ENCODE measurements at regions of chr9 and their contacts with region 1.

Region 1: GRCh38 chr9:134099123-134099787 is 31.4 kb upstream of the BRD3 start:
- DNase-seq: peak; percentile 69 to 78 (median 74)
- ATAC-seq: peak; percentile 94
- H3K4me3 ChIP-seq: no peak overlapping the region
- H3K27ac ChIP-seq: no peak overlapping the region
- H3K4me1 ChIP-seq: no peaks in the 10 kb centered on the region
- H3K27me3 ChIP-seq: peaks cover 20 to 37% of the 10 kb centered on the region in 2 experiments; a peak in 4 of 5 replicates
- CTCF ChIP-seq: peak; percentile 81 to 94 (median 93)
- EP300 ChIP-seq: no peak
- POLR2A ChIP-seq: no peak
- RAD21 ChIP-seq: peak; percentile 67 to 93

Region 2: DNA sequence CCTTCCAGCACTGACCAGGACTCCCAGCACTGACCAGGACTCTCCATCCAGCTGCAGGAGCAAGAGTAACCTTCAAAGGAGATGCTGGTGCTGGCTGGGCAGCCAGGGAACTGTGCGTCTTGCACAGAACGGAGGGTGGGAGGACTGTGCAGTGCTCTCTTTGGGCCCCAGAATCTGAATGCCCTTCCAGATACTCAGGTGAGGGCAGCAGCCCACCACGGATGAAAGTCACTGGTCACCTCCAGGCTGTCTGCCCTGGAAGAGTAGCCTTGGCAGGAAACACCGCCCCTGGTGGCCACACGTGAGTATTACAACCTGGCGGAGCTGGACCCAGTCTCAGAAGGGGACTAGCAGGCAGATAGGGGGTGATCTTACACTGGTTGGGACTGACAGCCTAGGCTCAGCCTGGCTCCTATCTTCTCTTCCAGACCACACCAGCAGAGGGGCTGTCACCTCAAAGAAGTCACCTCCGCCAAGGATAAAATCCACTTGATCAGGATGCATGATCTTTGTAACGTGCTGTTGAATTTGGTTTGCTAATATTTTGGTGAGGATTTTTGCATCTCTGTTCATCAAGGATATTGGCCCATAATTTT is 356.3 kb before region 1 on chr9:
- CTCF ChIA-PET with region 1: no interaction called
- POLR2A ChIA-PET with region 1: no interaction called
- in situ Hi-C with region 1: no loop called
- intact Hi-C with region 1: no loop called
- DNase-seq: peak; percentile 78 to 91 (median 88)
- ATAC-seq: peak; percentile 96
- H3K4me3 ChIP-seq: no peak overlapping the region
- H3K27ac ChIP-seq: no peak overlapping the region
- H3K4me1 ChIP-seq: peaks cover 0 to 9% of the 10 kb centered on the region in 2 experiments; a peak in 3 of 5 replicates
- H3K27me3 ChIP-seq: peaks cover 0 to 29% of the 10 kb centered on the region in 2 experiments; a peak in 2 of 5 replicates
- CTCF ChIP-seq: peak; percentile 98 to 99 (median 98)
- EP300 ChIP-seq: no peak
- POLR2A ChIP-seq: no peak
- RAD21 ChIP-seq: peak; percentile 23 to 57; a peak in 3 of 4 replicates

Region 3: DNA sequence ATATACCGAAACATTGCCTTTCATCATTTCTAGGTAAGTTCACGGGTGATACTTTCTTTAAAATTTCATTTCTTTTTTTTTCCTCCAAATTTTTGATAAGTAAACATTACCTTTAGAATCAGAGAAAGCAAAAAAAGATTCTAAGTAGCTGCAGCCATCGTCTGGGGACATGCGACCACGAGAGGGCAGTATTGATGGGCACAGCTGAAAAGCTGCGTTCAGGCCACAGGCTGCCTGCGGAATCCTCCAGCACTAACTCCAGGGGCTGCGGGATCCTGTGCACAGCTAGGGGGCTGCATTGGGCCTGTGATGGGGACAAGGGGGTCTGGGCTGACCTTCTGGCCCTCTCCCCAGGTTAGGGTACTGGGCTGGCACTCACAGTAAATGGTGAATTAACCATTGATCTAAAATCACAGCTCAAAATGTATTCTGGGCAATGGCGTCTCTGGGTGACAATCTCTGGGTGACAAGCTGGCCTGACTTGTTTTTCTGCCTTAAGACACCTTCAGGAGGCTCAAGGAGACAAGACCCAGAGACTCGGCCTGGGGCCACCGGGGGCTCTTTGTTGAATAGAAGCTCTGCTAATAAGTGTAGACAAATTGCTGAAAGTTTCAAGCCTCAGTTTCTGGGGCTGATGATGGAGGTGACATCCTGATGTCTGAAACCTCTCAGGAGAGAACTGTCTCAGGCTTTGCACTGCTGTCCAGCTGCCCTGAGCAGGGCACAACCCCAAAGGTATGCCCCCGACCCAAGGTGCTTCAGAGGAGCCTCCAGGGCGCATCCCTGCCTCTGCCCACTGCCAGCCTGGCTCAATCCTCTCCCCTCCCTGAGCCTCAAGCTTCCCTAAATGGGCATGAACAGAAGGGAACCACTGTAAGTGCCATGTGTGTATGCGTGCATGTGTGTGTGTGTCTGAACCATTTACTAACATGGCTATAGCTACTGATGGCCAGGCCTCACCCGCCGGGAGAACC is 316.8 kb before region 1 on chr9:
- CTCF ChIA-PET with region 1: interaction called, 10 read pairs
- POLR2A ChIA-PET with region 1: no interaction called
- in situ Hi-C with region 1: no loop called
- intact Hi-C with region 1: no loop called
- DNase-seq: peak; percentile 73 to 77 (median 76)
- ATAC-seq: peak; percentile 93
- H3K4me3 ChIP-seq: no peak overlapping the region
- H3K27ac ChIP-seq: no peak overlapping the region
- H3K4me1 ChIP-seq: peaks cover 0 to 4% of the 10 kb centered on the region in 2 experiments; a peak in 2 of 5 replicates
- H3K27me3 ChIP-seq: peaks cover 0 to 44% of the 10 kb centered on the region in 2 experiments; a peak in 3 of 5 replicates
- CTCF ChIP-seq: peak; percentile 81 to 89 (median 87)
- EP300 ChIP-seq: no peak
- POLR2A ChIP-seq: no peak
- RAD21 ChIP-seq: peak; percentile 46 to 73

Region 4: GRCh38 chr9:133792721-133793470 is 306.4 kb before region 1 on chr9:
- CTCF ChIA-PET with region 1: interaction called, 13 read pairs
- POLR2A ChIA-PET with region 1: no interaction called
- in situ Hi-C with region 1: loop called (anchors 5 kb)
- intact Hi-C with region 1: loop called (anchors 1 kb)
- DNase-seq: peak; percentile 71 to 87 (median 84)
- ATAC-seq: peak; percentile 96
- H3K4me3 ChIP-seq: no peak overlapping the region
- H3K27ac ChIP-seq: no peak overlapping the region
- H3K4me1 ChIP-seq: peaks cover 0 to 17% of the 10 kb centered on the region in 2 experiments; a peak in 2 of 5 replicates
- H3K27me3 ChIP-seq: peaks cover 2 to 49% of the 10 kb centered on the region in 2 experiments; a peak in 4 of 5 replicates
- CTCF ChIP-seq: peak; percentile 88 to 89 (median 88)
- EP300 ChIP-seq: no peak
- POLR2A ChIP-seq: no peak
- RAD21 ChIP-seq: peak; percentile 92 to 93

Region 5: DNA sequence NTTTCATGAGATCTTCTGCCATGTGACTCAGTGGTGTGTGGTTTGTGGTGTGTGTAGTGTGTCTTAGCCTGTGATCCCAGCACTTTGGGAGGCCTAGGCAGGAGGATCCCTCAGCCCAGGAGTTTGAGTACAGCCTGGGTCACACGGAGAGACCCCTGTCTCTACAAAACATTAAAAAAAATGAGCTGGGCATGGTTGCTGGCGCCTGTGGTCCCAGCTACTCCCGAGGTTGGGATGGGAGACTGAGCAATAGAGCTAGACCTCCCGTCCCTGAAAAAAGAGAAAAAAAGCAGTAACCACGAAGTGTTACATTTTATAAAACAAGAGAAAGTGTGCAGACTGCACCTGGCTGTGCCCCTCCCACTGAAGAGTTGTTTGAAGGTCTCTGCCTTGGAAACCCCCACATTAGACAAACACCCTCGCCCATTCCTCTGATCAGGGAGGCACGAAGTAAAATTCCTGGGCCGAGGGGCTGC is 86.3 kb after region 1 on chr9:
- CTCF ChIA-PET with region 1: no interaction called
- POLR2A ChIA-PET with region 1: no interaction called
- in situ Hi-C with region 1: no loop called
- intact Hi-C with region 1: no loop called
- DNase-seq: no peak
- ATAC-seq: no peak
- H3K4me3 ChIP-seq: no peak overlapping the region
- H3K27ac ChIP-seq: no peak overlapping the region
- H3K4me1 ChIP-seq: peaks cover 4 to 26% of the 10 kb centered on the region in 2 experiments; a peak in 3 of 5 replicates
- H3K27me3 ChIP-seq: peaks cover 3 to 46% of the 10 kb centered on the region in 2 experiments; a peak in 4 of 5 replicates
- CTCF ChIP-seq: no peak
- EP300 ChIP-seq: no peak
- POLR2A ChIP-seq: no peak
- RAD21 ChIP-seq: no peak

Measured in K562 (cell line).